Breast epithelium (tissue), 4 donors: ENCODE measurements at regions of chr1 and their contacts with region 1.

Region 1: DNA sequence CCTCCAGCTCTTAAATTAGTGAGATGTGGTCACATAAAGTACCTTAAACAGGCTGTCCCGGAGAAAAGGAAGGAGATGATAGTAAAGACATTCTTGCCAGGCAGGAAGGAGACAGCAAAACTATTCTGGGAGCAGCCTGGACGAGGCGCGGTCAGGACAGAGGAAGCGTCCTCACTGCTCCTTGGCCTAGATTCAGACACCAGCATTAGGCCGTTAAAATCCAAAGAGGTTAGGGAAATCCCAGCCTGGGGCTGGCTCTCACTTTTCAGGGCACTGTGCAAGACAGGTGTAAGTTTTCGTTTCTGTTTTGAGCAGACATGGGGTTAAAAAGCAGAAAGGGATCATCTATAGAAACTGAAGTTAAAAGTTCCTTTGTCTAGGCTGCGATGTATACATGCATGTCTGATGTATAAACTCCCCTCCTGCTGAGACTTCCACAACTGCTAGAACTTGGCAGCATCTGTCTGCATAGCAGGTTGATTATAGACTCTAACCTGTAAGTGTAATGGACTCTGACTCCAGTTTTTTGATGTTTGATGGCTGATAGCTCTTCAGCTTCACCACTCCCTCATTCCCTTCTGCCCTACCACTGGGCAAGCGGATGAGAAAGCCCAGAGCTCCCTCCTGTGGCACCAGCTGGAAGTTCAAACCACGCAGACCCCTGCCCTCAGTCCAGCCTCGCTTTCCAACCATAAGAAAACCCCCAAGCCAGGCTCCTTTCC is 21.5 kb downstream of the STPG1 start:
- DNase-seq: peak in 1 of 2 donors; percentile 61
- H3K4me3 ChIP-seq: peak overlapping the region in 2 of 3 donors; percentile 2 to 15
- H3K27ac ChIP-seq: peak overlapping the region; percentile 82 to 86
- H3K4me1 ChIP-seq: no peaks in the 10 kb centered on the region
- H3K27me3 ChIP-seq: no peaks in the 10 kb centered on the region
- CTCF ChIP-seq: peak; percentile 60 to 87 (median 80)
- POLR2A ChIP-seq: no peak

Region 2: DNA sequence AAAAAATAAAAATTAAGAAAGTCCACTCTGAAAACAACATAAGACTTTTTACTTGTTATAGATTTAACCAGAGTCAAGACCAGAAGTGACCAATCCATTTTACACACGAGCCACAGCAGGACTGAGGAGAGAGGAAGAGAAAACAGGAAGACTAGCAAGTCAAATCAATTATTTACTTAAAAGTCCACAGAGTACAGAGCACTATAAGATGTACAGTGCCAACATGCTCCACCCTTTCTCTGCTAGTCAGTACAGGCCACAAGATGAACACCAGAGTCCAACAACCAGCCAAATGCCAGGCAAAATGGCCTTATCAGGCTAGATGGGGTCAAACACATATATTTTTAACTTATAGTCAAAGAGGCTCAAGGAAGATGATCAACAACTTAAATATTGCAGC is 1242.9 kb before region 1 on chr1:
- intact Hi-C with region 1: no loop called
- DNase-seq: no peak
- H3K4me3 ChIP-seq: no peak overlapping the region
- H3K27ac ChIP-seq: no peak overlapping the region
- H3K4me1 ChIP-seq: no peaks in the 10 kb centered on the region
- H3K27me3 ChIP-seq: no peaks in the 10 kb centered on the region
- CTCF ChIP-seq: no peak
- POLR2A ChIP-seq: no peak

Region 3: DNA sequence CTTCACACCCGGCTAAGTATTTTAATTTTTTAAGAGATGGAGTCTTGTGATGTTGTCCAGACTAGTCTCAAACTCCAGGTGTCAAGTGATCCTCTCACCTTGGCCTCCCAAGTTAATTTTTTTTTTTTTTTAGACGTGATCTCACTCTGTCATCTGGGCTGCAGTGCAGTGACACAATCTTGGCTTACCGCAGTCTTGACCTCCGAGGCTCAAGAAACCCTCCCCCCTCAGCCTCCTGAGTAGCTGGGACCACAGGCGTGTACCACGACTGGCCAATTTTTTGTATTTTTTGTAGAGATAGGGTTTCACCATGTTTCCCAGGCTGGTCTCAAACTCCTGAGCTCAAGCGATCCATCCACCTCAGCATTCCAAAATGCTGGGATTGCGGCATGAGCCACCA is 193.3 kb before region 1 on chr1:
- intact Hi-C with region 1: loop called (anchors 1 kb)
- DNase-seq: no peak
- H3K4me3 ChIP-seq: no peak overlapping the region
- H3K27ac ChIP-seq: no peak overlapping the region
- H3K4me1 ChIP-seq: peaks cover 13 to 14% of the 10 kb centered on the region in 2 donors
- H3K27me3 ChIP-seq: no peaks in the 10 kb centered on the region
- CTCF ChIP-seq: no peak
- POLR2A ChIP-seq: no peak

Region 4: GRCh38 chr1:24727501-24728216 is 335.6 kb after region 1 on chr1:
- intact Hi-C with region 1: no loop called
- DNase-seq: peak in 1 of 2 donors; percentile 65
- H3K4me3 ChIP-seq: no peak overlapping the region
- H3K27ac ChIP-seq: peak overlapping the region; percentile 70 to 72
- H3K4me1 ChIP-seq: peaks cover 0 to 4% of the 10 kb centered on the region in 2 donors
- H3K27me3 ChIP-seq: no peaks in the 10 kb centered on the region
- CTCF ChIP-seq: no peak
- POLR2A ChIP-seq: no peak

Region 5: DNA sequence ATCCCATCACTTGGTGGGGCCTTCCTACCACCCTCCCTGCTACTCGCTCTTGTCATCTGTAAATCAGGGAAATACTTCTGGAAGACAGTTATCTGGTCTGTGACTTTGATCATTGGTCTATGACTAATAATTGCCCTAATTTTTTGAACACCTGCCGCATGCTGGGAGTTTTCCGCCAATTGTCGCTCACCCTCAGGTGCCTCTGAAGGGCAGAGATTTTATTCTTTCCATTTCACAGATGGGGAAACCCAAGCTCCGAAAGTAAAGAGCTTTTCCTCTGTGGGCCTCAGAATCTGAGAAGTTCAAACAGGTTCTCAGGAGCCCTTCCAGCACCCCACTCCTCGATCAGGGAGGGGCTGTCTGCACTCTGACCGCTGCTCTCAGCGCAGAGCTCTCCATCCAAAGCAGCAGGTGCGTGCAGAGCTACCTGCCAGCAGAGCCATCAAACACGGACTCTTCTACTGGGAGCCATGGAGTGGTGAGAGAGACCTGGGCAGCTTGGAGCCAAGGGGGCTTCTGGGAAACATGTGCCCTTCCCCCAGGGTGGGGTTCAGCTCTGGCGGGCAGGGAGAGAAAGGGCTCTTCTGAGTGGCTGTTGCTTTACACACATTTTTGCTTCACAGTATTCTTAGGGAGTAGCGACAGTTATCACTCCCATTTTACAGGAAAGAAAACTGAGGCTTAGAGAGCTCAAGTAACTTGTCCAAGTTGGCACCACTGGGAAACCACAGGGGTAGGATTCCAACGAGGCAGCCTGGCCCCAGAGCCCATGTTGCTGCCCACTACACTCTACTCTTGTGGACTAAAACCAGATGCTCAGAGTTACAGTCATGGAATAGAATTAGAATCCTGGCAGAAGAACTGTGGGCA is 543.8 kb after region 1 on chr1:
- intact Hi-C with region 1: no loop called
- DNase-seq: no peak
- H3K4me3 ChIP-seq: no peak overlapping the region
- H3K27ac ChIP-seq: no peak overlapping the region
- H3K4me1 ChIP-seq: no peaks in the 10 kb centered on the region
- H3K27me3 ChIP-seq: peaks cover 0 to 34% of the 10 kb centered on the region in 2 donors
- CTCF ChIP-seq: no peak
- POLR2A ChIP-seq: no peak